K562 (cell line): ENCODE measurements at regions of chr7 and their contacts with region 1.

Region 1: GRCh38 chr7:98119256-98119918 is 12.7 kb downstream of the LMTK2 start:
- DNase-seq: no peak
- ATAC-seq: no peak
- H3K4me3 ChIP-seq: no peak overlapping the region
- H3K27ac ChIP-seq: no peak overlapping the region
- H3K4me1 ChIP-seq: no peaks in the 10 kb centered on the region; a peak in 2 of 5 replicates
- H3K27me3 ChIP-seq: no peaks in the 10 kb centered on the region
- CTCF ChIP-seq: no peak
- EP300 ChIP-seq: no peak
- POLR2A ChIP-seq: no peak
- RAD21 ChIP-seq: no peak

Region 2: DNA sequence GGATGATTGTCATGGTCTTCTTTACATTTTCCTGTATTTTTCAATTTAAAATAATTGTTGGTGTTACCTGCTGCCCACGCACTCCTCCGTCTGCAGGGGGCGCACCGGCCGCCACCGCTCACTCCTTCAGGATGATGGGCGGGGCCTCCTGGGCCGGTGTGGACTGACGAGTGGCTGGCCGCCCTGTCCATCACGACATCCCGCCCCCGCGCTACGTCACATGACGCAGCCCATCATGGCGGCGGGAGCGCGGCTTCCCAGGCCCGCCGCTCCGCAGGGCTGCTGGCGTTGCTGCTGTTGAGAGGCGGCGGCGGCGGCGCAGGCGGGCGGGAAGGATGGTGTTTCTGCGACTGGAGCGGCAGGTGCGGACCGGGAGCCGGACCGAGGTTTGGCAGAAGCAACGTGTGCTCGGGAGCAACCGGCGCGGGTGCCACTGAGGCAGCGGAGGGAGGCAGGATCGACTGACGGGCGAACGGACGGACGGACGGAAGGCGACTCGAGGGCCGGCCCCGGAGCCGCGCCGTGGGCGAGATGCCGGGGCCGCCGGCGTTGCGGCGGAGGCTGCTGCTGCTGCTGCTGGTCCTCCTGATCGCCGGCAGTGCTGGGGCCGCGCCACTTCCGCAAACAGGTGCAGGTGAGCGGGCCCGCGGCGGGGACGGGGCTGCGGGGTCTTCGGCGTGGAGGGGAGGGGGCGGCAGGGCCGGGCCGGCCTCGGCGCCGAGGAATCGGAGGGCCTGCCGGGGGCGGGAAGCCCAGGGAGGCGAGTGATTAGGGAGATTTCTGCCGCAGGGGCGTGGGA is 12.5 kb before region 1 on chr7 and contains the start of gene LMTK2:
- CTCF ChIA-PET with region 1: no interaction called
- POLR2A ChIA-PET with region 1: interaction called, 54 read pairs
- in situ Hi-C with region 1: no loop called
- intact Hi-C with region 1: no loop called
- DNase-seq: peak; percentile 97 to 100 (median 100)
- ATAC-seq: peak; percentile 99
- H3K4me3 ChIP-seq: peak within 1 kb of the TSS; percentile 88
- H3K27ac ChIP-seq: peak within 1 kb of the TSS; percentile 75
- H3K4me1 ChIP-seq: peaks cover 11 to 17% of the 10 kb centered on the region in 2 experiments
- H3K27me3 ChIP-seq: peaks cover 0 to 3% of the 10 kb centered on the region in 2 experiments; a peak in 1 of 5 replicates
- CTCF ChIP-seq: peak; percentile 89 to 99 (median 97)
- EP300 ChIP-seq: no peak
- POLR2A ChIP-seq: peak; percentile 96
- RAD21 ChIP-seq: peak; percentile 76 to 79
- polyA plus RNA-seq, gene LMTK2: 0.78 to 1.8 TPM

Region 3: DNA sequence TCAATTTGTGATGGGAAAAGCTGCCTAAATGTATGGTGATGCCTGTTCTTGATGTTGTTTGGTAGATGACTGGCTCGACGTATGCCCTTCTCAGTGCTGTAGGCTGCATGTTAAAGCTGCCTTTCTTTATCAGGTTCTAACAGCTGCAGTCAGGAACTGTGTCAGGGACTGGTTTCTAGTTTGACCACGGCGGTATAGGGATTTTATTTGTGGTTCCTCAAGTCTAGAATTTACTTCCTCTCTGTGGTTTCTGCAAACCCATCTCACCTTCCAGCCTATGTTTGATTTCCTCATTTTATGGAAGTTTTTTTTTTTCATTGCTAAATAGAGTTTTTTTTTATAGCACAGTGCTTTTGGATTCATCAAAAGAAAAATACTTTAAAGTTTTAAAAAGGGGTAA is 13.8 kb after region 1 on chr7:
- CTCF ChIA-PET with region 1: no interaction called
- POLR2A ChIA-PET with region 1: interaction called, 15 read pairs
- in situ Hi-C with region 1: no loop called
- intact Hi-C with region 1: no loop called
- DNase-seq: peak in 3 of 4 experiments; percentile 35 to 80 (median 75)
- ATAC-seq: peak; percentile 91
- H3K4me3 ChIP-seq: no peak overlapping the region
- H3K27ac ChIP-seq: peak overlapping the region; percentile 32; the same call in 1 of the 3 replicates
- H3K4me1 ChIP-seq: peaks cover 19 to 29% of the 10 kb centered on the region in 2 experiments
- H3K27me3 ChIP-seq: no peaks in the 10 kb centered on the region
- CTCF ChIP-seq: no peak
- EP300 ChIP-seq: peak; percentile 77
- POLR2A ChIP-seq: no peak
- RAD21 ChIP-seq: no peak

Region 4: DNA sequence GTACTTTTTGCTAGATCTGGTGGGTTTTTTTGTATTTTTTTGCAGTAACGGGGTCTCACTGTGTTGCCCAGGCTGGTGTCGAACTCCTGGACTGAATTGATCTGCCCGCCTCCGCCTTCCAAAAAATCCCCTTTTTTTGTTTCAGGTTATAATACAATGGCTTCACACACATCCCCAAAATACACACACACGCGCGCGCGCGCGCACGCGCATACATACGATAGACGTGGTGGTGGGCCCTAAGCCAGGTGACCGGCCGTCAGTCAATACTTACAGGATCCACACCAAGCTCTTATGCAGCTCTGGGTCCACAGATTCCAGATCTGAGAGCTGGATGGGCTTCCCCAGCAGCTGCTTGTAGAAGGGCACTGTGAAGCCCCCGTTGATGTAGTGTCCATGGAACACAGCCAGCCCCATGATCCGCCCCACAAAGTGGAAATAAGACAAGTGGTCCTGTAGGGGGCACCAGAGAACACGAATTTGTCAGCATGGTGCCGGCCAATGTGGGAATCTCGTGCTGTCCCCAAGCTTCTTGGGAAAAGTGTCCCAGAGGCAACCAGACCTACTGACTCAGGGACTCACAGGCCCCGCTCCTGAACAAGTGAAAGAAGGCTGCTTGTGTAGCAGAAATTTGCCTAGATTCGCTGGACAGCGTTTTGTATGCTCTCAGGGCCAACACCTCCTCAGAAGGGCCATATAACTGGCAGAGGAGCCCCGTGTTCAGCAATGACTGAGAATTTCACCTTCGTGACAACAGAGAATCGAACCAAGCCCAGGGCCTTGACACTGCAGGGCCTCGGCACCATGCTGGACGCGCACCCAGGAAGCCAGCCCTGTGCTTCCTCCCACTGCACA is 920.9 kb after region 1 on chr7:
- CTCF ChIA-PET with region 1: no interaction called
- POLR2A ChIA-PET with region 1: no interaction called
- in situ Hi-C with region 1: no loop called
- intact Hi-C with region 1: no loop called
- DNase-seq: peak; percentile 87 to 89 (median 88)
- ATAC-seq: peak; percentile 95
- H3K4me3 ChIP-seq: no peak overlapping the region
- H3K27ac ChIP-seq: no peak overlapping the region
- H3K4me1 ChIP-seq: no peaks in the 10 kb centered on the region; a peak in 3 of 5 replicates
- H3K27me3 ChIP-seq: no peaks in the 10 kb centered on the region
- CTCF ChIP-seq: peak; percentile 84 to 93 (median 90)
- EP300 ChIP-seq: no peak
- POLR2A ChIP-seq: no peak
- RAD21 ChIP-seq: peak; percentile 87 to 92